Activated T-helper 2 cell treated with anti-CD3 and anti-CD28 coated beads, Interferon-gamma antibody, Interleukin-2, Interleukin-4, amounts not matched to agents 10 μg/mL and 5 μg/mL and 100 μg/mL, durations not matched to agents 14 hours and 24 hours and 36 hours (primary cell): ENCODE measurements at regions of chr6 and their contacts with region 1.

Region 1: GRCh38 chr6:127855542-127856159 is 45.2 kb downstream of the THEMIS start:
- DNase-seq: no peak
- H3K4me3 Mint-ChIP-seq: no peak overlapping the region
- H3K27ac Mint-ChIP-seq: peak overlapping the region; percentile 40
- H3K4me1 Mint-ChIP-seq: peaks cover 33% of the 10 kb centered on the region
- H3K27me3 Mint-ChIP-seq: no peaks in the 10 kb centered on the region

Region 2: DNA sequence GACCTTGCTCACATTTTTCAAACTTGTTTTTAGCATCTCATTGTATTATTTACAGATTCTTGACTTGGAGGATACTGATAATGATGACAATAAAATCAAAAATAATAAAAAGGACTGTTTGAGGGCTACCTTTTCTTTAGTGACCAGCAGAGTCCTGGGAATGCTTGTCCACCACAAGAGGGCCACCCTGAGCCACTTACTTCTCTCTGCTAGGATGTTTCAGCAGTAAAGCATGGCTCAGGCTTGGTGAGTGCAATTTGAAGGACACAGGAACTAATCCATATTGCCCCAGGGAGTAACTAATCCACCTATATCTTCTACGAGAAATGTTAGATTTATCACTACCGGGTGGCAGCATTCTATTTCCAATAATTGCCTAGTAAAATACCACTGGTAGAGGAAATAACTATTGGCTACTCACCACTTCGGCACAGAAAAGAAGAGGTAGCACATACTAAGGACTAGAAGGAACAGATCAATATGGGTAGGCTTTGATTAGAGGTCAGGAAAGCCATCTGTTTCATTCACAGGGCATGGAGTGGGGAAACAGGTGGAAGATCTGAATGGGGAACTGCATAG is 390.7 kb before region 1 on chr6:
- intact Hi-C with region 1: no loop called
- DNase-seq: peak; percentile 31
- H3K4me3 Mint-ChIP-seq: no peak overlapping the region
- H3K27ac Mint-ChIP-seq: no peak overlapping the region
- H3K4me1 Mint-ChIP-seq: peaks cover 25% of the 10 kb centered on the region
- H3K27me3 Mint-ChIP-seq: no peaks in the 10 kb centered on the region

Region 3: DNA sequence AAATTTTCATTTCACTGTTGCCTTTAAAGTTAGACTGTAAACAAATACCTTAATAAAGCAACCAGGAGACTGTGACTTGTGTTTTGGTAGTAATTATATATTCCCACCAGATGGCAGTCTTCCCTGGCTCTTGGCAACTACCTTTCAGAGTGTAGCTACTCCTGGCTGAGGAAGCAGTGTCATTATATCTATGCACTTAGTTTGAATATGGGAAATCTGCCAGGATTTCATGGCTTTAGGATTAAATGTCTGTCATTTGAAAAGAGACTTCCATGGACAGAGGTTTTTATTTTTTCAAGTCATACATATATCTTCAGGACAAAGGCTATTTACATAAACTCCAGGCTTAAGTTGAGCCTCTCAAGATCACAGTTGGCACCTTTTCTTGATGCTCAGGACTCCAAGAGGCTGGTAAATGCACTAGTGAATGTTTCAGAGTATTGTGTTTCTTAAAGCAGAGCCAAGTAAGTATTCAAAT is 118.6 kb before region 1 on chr6:
- intact Hi-C with region 1: loop called (anchors 1 kb)
- DNase-seq: peak; percentile 11
- H3K4me3 Mint-ChIP-seq: no peak overlapping the region
- H3K27ac Mint-ChIP-seq: no peak overlapping the region
- H3K4me1 Mint-ChIP-seq: no peaks in the 10 kb centered on the region
- H3K27me3 Mint-ChIP-seq: no peaks in the 10 kb centered on the region

Region 4: DNA sequence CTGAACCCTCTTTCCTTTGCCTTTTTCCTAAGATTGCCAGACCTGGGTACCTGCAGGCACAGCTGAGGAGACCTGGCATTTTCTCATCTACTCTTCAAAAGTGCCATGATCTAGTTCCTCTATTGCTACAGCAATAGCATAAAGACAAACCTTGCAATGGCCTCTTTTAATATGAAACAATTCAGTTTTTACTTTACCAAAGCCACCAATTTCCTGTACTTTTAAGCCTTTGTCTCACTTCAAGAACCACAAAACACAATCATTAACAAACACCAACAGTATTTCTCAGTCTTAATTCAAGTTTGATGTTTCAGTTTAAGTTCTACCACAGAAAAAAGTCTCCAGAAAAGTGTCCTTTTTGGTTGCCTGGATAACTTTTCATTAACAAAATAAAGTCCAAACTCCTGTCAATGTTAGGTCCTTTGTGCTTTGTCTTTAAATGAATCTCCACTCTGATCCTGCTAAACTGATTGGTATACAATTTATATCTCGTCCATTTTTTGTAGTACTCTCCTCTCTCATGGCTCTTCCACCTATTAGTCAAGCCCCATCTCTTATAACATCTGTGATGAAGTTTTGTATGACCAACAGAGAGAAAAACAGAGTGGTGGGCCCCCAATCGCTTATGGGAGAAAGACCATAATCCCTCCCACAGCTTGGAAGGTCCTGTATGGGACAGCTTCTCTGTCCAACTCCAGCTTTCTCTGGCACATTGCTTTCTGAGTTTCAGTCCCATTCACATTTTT is 95.7 kb after region 1 on chr6:
- intact Hi-C with region 1: loop called (anchors 5 kb)
- DNase-seq: no peak
- H3K4me3 Mint-ChIP-seq: peak overlapping the region; percentile 56
- H3K27ac Mint-ChIP-seq: peak overlapping the region; percentile 96
- H3K4me1 Mint-ChIP-seq: peaks cover 50% of the 10 kb centered on the region
- H3K27me3 Mint-ChIP-seq: no peaks in the 10 kb centered on the region

Region 5: DNA sequence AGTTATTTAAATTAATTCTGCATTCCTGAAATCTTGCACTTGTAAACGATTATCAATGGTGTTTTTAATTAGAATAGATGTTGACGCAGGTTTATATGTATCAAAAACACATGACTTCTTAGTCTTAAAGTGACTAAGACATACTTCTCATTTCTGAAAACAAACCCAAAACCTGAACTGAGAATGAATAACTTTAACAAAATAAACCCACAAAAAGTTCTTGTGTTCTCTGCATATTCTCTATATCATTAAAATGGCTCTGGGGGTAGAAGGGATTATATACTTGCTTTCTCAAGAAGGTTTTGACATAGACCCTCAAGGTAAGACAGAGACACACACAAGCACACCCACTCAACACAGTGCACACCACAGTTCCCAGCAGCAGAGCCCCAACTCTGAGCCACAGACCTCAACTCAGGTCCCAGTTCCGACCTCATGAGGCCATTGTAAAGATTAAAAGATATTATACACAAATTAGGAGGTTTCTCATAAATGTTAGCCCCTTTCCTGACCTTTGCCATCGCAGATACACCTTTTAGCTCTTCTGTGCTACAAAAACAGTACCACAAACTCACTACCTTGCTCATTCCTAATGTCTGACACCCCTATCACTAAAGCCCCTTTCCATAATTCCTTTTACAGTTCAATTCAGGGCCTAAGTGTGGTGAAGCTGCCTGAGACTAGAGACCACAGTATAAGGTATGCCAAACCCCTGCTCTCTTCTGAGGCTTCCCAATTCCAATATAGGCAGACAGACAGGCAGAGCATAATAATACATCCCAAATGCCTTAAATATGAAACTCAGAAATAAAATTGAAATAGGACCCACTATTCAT is 396.9 kb after region 1 on chr6:
- intact Hi-C with region 1: loop called (anchors 5 kb)
- DNase-seq: no peak
- H3K4me3 Mint-ChIP-seq: no peak overlapping the region
- H3K27ac Mint-ChIP-seq: peak overlapping the region; percentile 7
- H3K4me1 Mint-ChIP-seq: peaks cover 21% of the 10 kb centered on the region
- H3K27me3 Mint-ChIP-seq: peaks cover 18% of the 10 kb centered on the region

Region 6: GRCh38 chr6:128520436-128521281 is 665.0 kb after region 1 on chr6 and contains the start of gene PTPRK:
- intact Hi-C with region 1: loop called (anchors 10 kb)
- DNase-seq: peak; percentile 80
- H3K4me3 Mint-ChIP-seq: peak within 1 kb of the TSS; percentile 90
- H3K27ac Mint-ChIP-seq: peak within 1 kb of the TSS; percentile 74
- H3K4me1 Mint-ChIP-seq: peaks cover 11% of the 10 kb centered on the region
- H3K27me3 Mint-ChIP-seq: peaks cover 74% of the 10 kb centered on the region
- total RNA-seq, gene PTPRK: 4.2 and 6.1 TPM in 2 replicates